A673 (cell line): ENCODE measurements at regions of chr12 and their contacts with region 1.

Region 1: DNA sequence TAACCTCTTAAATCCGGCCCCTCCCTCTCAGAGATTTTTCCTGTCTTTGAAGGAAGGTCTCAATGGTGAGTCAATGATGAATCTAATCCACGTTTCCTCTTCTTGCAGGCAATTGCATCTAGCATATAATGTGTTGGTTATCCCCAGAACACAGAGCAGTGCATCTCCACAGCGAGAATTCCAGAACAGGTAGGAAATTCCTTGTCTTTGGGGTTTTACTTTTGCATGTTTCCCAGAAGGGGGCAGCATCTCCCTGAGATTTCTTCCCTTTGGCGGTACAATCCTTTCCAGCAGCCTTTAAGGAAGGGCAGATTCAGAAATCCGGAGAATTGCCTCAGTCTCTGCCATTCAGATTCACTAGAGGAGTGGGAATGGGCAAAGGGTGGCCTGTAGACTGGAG is 128.0 kb downstream of the KCNA5 start:
- DNase-seq: peak; percentile 37
- H3K4me3 ChIP-seq: no peak overlapping the region
- H3K27ac ChIP-seq: no peak overlapping the region
- H3K4me1 ChIP-seq: no peaks in the 10 kb centered on the region
- H3K27me3 ChIP-seq: peaks cover 18% of the 10 kb centered on the region
- CTCF ChIP-seq: peak; percentile 69

Region 2: GRCh38 chr12:5511644-5512600 is 340.2 kb after region 1 on chr12:
- CTCF ChIA-PET with region 1: no interaction called
- POLR2A ChIA-PET with region 1: no interaction called
- intact Hi-C with region 1: loop called (anchors 5 kb)
- DNase-seq: peak; percentile 49
- H3K4me3 ChIP-seq: no peak overlapping the region
- H3K27ac ChIP-seq: no peak overlapping the region
- H3K4me1 ChIP-seq: no peaks in the 10 kb centered on the region
- H3K27me3 ChIP-seq: peaks cover 30% of the 10 kb centered on the region
- CTCF ChIP-seq: peak; percentile 72